Mammary epithelial cell (primary cell): ENCODE measurements at regions of chr4 and their contacts with region 1.

Region 1: DNA sequence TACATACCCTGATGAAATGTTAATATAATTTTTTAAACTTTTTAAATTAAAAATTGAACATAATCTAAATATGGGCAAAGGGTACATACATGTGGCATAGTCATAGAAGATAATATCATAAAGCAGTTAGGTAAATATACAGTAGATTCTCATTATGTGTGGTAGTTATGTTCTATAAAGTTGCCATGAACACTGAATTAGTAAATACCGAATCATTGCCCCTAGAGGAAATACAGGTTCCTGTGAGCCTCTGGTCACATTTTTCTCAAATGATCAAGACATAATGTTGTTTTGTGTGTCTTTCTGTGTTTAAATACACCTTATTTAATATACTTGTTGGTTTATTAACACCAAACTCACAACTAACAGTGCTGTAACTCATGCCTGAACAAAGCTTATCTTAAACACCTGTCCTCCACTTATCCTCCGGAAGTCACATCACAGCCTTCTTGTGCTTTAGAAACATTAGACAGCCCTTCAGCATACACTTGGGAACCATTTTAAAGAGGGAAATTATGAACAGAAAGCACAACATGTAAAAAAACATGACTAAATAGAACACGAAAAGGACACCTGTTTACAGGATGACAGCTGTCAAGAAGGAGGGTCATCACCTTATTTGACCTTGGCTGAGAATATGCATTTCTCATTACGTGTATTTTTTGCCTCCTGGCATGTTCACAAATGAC is 169.4 kb upstream of the NAP1L5 start:
- DNase-seq: peak; percentile 80
- H3K4me3 ChIP-seq: no peak overlapping the region
- H3K27ac ChIP-seq: peak overlapping the region; percentile 80
- H3K4me1 ChIP-seq: peaks cover 22% of the 10 kb centered on the region
- H3K27me3 ChIP-seq: no peaks in the 10 kb centered on the region
- CTCF ChIP-seq: no peak

Region 2: GRCh38 chr4:88893961-88894360 is 27.0 kb after region 1 on chr4:
- CTCF ChIA-PET with region 1: no interaction called
- dilution Hi-C with region 1: no loop called
- in situ Hi-C with region 1: no loop called
- intact Hi-C with region 1: loop called (anchors 1 kb)
- DNase-seq: no peak
- H3K4me3 ChIP-seq: no peak overlapping the region
- H3K27ac ChIP-seq: no peak overlapping the region
- H3K4me1 ChIP-seq: no peaks in the 10 kb centered on the region
- H3K27me3 ChIP-seq: no peaks in the 10 kb centered on the region
- CTCF ChIP-seq: no peak

Region 3: DNA sequence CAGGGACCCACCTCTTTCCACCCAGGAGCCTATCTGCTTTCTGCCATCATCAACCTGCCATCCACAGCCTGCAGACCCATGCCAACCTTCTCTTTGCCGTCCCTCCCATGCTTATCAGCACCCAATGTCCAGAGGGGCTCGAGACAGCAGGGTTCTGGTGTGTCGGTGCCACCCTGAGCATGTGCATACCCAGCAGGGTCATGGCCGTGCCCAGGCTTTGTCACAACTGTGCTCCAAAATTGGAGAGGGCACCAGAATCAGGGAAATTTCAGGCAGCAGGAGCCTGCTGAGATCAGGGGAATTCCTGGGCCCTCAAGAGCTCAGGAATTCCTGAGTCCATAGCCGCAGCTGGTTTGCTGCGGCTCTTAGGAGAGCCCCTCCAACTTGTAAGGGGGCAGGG is 1590.8 kb after region 1 on chr4:
- CTCF ChIA-PET with region 1: no interaction called
- dilution Hi-C with region 1: no loop called
- in situ Hi-C with region 1: no loop called
- intact Hi-C with region 1: no loop called
- DNase-seq: no peak
- H3K4me3 ChIP-seq: no peak overlapping the region
- H3K27ac ChIP-seq: no peak overlapping the region
- H3K4me1 ChIP-seq: no peaks in the 10 kb centered on the region
- H3K27me3 ChIP-seq: no peaks in the 10 kb centered on the region
- CTCF ChIP-seq: no peak